HEK293T (cell line): ENCODE measurements at regions of chr7 and their contacts with region 1.

Region 1: DNA sequence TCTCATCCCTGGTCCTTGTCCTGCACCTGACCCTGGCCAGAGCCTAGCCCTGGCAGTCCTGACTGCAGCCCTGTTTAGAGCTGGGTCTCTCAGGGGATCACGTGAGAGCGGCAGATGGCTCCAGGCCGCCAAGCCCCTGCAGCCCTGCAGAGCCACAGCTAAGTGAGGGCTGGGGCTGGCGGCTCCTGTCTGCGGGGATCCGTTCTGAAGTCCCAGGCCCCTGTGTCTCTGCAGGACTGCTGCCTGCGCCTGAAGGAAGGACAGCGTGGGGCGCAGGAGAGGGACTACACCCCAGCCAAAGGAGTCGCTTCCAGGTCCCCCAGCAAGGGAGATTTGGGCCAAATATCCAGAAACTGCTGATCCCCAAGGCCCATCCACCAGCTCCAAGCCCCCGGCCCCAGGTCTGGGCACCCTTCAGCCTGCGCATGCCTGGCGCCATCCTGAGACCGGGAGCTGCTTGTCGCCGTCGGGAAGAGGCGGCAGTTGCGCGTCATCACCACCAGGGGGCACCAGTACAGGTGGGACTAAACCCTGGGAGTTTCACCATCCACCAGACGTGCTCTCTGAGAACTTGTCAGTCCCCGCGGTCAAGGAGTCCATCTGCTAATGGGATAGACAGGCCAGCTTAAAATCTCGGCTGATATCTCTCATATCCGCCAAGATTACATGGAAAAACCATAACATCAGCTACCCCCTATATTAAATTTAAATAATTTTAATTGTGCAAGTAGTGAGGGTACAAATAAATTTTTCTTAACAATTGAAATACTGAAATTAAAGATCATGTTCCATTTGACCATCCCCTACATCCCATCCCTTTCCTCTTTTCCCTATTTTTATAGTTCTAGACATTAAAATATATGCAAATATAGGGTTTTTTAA is 25.1 kb upstream of the GHRHR start:
- DNase-seq: peak; percentile 88

Region 2: GRCh38 chr7:30688718-30689221 is 249.9 kb before region 1 on chr7:
- CTCF ChIA-PET with region 1: no interaction called
- POLR2A ChIA-PET with region 1: no interaction called
- DNase-seq: no peak

Region 3: DNA sequence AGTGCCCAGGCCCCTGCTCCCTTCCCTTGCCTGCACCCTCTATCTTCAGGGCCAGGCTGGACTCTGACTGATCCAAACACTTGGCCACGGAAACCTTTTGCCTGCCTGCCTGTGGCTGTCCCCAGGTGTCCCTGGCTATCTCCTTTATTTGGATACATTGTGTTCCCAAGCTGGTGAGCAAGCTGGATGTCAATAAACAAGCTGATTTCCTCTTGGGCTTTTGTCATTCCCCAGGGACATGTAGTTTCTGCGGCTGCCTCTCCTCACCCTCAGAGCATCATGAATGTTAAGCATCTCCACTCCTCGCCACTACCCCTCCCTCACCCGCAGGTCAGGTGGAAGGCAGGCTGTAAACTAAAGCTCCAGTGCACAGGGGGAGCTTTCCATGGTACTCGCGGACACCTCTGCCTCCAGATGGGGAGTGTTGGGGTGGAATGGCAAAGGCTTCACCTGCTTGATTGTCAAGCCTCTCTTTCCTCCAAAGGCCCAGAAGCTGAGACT is 32.0 kb after region 1 on chr7:
- CTCF ChIA-PET with region 1: interaction called, 12 read pairs
- POLR2A ChIA-PET with region 1: no interaction called
- DNase-seq: peak; percentile 8

Region 4: GRCh38 chr7:30983042-30983913 is 44.6 kb after region 1 on chr7:
- CTCF ChIA-PET with region 1: interaction called, 10 read pairs
- POLR2A ChIA-PET with region 1: no interaction called
- DNase-seq: peak; percentile 91

Region 5: GRCh38 chr7:31171216-31171785 is 232.6 kb after region 1 on chr7:
- CTCF ChIA-PET with region 1: interaction called, 12 read pairs
- POLR2A ChIA-PET with region 1: no interaction called
- DNase-seq: no peak